ENCODE measurements at regions of chr6 and their contacts with region 1.

Region 1: DNA sequence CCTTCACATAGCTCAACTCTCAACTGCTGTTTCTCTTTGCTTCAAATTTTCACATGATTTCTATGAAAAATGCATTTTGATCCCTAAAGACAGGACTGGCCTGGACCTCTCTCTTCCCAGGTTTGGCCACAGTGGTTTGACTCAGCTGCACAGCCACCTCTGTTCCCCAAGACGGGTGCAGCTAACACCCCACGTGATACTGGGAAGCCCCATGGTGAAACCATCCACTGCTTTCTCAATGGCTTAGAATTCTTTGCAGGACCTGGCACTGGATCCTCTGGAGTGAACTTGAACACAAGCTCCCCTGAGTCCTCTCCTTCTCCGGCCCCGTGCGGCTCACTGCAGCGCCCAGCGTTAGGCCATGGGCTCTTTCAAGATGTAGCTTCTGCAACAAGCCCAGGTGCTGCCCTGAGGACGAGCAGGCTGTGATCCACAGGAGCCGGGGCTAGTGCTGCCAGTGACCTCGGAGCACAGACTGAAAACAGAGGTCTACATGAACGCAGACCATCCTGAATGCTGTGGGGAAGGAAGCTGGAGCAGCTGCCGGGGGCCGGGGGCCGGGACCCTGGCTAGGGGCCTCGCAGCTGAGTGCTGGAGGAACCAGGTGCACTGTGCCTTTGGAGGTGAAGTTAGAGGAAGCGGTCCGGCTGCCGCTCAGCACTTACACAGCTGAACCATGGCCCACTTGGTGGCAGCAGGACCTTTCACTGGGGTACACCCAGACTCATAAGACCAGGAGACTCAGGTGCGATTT is 58.8 kb upstream of the MPC1 start:
- DNase-seq: peak; percentile 30
- H3K4me3 ChIP-seq: no peak overlapping the region
- H3K27ac ChIP-seq: no peak overlapping the region
- H3K4me1 ChIP-seq: no peaks in the 10 kb centered on the region
- CTCF ChIP-seq: 0 out of 2 replicates have a peak, but pooled peaks have one; percentile 24

Region 2: GRCh38 chr6:166420351-166420750 is 21.2 kb before region 1 on chr6:
- CTCF ChIA-PET with region 1: no interaction called
- POLR2A ChIA-PET with region 1: interaction called, 10 read pairs
- intact Hi-C with region 1: no loop called
- DNase-seq: no peak
- H3K4me3 ChIP-seq: no peak overlapping the region
- H3K27ac ChIP-seq: no peak overlapping the region
- H3K4me1 ChIP-seq: no peaks in the 10 kb centered on the region
- CTCF ChIP-seq: no peak; the same call in 1 of the 2 replicates